ENCODE measurements at regions of chr15 and their contacts with region 1.

Region 1: DNA sequence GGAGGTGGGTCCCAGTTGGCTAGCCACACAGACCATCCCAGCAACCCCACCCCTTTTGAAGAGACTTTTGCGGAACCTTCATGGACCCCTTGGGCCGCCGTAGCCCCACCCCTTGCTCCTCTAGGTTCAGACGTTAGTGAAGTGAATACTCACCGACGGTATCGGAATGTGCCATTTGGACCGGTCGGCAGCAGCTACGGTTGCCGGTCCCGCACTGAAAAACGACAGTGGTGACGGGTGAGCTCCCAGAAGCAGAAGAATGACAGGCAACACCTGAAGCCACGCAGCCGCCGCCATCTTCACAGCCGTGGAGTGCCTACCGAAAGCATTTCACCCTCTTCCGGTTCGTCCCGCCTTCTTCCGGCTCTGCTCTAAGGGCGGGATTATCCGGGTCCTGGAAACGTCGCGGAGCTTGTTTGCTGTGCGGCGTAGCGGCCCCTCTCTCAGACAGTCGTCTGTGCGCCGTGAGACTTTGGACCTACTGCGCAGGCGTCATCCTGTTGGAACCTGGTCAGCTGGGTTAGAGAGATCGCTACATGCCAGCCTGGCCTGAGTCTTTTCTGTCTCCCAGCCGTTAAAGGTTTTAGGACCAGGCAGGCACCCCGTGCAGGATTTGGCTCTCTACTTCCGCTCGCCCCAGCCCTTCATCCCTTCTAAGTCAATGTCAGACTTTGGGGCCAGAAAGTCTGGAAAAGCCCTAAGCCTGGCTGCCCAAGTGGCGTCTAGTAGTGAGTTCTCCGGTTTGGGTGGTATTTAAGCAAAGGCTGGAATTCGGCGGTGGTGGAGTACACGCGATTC is at the starts of genes GANC and TMEM87A:
- H3K4me3 Mint-ChIP-seq: peak within 1 kb of the TSS; percentile 95
- H3K27ac Mint-ChIP-seq: peak within 1 kb of the TSS; percentile 96
- H3K4me1 Mint-ChIP-seq: peaks cover 40% of the 10 kb centered on the region
- H3K27me3 Mint-ChIP-seq: no peaks in the 10 kb centered on the region

Region 2: GRCh38 chr15:42084460-42085235 is 188.7 kb before region 1 on chr15:
- intact Hi-C with region 1: no loop called
- H3K4me3 Mint-ChIP-seq: no peak overlapping the region
- H3K27ac Mint-ChIP-seq: no peak overlapping the region
- H3K4me1 Mint-ChIP-seq: peaks cover 12% of the 10 kb centered on the region
- H3K27me3 Mint-ChIP-seq: peaks cover 12% of the 10 kb centered on the region

Region 3: DNA sequence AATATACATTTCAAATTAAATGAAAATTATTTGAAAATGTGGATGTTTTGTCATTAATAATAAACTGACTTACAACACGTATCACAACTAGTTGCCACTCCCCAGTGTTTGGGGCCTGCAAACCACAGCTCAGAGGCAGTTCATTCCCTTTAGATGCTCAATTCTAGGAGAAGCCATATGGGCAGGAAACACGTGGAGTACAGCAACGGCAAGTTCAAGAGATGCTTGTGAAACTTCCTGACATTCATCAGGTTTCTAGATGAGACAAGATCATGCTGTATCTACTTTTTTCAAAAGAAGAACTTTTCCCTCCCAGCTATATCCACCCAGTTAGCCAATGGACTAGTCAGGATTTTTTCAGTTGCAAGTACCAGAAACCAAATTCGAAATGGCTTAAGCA is 161.4 kb before region 1 on chr15:
- intact Hi-C with region 1: no loop called
- H3K4me3 Mint-ChIP-seq: no peak overlapping the region
- H3K27ac Mint-ChIP-seq: no peak overlapping the region
- H3K4me1 Mint-ChIP-seq: peaks cover 45% of the 10 kb centered on the region
- H3K27me3 Mint-ChIP-seq: no peaks in the 10 kb centered on the region

Region 4: GRCh38 chr15:42207674-42208579 is 65.4 kb before region 1 on chr15 and contains the start of gene VPS39:
- intact Hi-C with region 1: loop called (anchors 1 kb)
- H3K4me3 Mint-ChIP-seq: peak within 1 kb of the TSS; percentile 98
- H3K27ac Mint-ChIP-seq: peak within 1 kb of the TSS; percentile 98
- H3K4me1 Mint-ChIP-seq: peaks cover 28% of the 10 kb centered on the region
- H3K27me3 Mint-ChIP-seq: no peaks in the 10 kb centered on the region

Region 5: GRCh38 chr15:42449770-42450424 is 176.6 kb after region 1 on chr15:
- intact Hi-C with region 1: no loop called
- H3K4me3 Mint-ChIP-seq: no peak overlapping the region
- H3K27ac Mint-ChIP-seq: no peak overlapping the region
- H3K4me1 Mint-ChIP-seq: no peaks in the 10 kb centered on the region
- H3K27me3 Mint-ChIP-seq: no peaks in the 10 kb centered on the region

Region 6: DNA sequence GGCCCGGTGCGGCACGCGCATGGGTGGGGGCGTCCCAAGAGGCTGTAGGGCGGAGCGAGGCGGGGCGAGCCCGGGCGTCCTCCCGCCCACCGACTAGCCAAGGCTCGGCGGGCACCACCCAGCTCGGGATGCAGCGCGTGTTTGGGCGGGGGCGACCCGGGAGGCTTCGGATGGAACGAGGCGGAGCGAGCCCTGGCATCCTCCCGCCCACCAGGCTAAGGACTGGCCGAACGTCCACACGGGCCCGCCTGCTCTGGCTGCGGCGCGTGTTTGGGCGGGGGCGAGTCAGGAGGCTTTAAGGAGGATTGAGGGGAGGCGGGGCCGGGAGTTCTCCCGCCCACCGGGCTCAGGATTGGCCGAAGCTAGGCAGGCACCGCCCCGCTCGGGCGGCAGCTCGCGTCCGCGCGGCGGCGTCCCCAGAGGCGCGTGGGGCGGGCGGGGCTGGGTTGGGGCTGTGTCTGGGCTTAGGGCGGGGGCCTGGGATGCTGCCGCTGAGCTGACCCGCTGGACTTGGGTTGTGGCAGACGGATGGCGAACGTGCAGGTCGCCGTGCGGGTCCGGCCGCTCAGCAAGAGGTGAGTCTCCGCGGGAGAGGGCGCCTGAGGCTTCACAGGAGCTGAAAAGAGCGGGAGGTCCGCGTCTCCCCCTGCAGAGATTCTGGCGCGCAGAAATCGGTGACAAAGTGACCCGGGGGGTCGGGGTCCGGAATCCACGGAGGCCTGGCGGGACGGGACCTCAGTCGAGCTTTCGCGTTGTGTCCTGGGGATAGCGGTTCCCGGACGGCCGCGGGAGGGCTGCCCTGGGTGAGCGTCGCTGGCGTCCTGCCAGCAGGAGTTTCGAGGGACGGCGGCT is 302.1 kb after region 1 on chr15 and contains the start of gene STARD9:
- intact Hi-C with region 1: loop called (anchors 10 kb)
- H3K4me3 Mint-ChIP-seq: peak within 1 kb of the TSS; percentile 96
- H3K27ac Mint-ChIP-seq: peak within 1 kb of the TSS; percentile 81
- H3K4me1 Mint-ChIP-seq: peaks cover 26% of the 10 kb centered on the region
- H3K27me3 Mint-ChIP-seq: peaks cover 50% of the 10 kb centered on the region

Region 7: DNA sequence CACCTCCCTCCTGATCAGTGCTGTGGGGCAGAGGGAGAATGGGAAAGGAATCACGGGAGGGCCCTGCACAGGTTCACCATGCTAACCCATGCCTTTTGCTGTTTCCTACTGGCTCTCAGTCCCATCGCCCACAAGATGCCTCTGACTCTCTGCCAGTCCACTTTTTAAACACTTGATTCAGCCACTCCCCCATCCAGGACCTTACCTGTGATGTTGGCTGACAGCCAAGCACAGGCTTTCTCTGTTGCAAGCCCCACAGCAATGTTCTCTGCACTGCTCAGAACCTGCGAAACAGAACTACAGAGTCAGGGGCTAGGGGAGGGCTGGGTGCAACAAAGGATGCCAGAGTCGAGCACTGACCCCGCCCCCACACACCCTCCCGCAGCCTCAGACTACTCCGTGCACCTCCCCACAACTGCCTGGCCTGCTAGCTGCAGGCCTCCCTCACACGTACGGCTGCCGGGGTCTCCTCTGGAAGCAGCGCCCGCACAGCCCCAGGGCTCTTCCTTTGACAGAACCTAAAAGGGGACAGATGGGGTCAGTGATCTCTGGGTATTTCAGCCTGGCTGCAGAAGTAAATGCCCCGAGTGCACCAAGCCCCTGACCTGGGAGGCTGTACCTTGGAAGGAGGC is 454.6 kb after region 1 on chr15:
- intact Hi-C with region 1: no loop called
- H3K4me3 Mint-ChIP-seq: no peak overlapping the region
- H3K27ac Mint-ChIP-seq: no peak overlapping the region
- H3K4me1 Mint-ChIP-seq: peaks cover 3% of the 10 kb centered on the region
- H3K27me3 Mint-ChIP-seq: no peaks in the 10 kb centered on the region

Measured in dendritic cell treated with granulocyte-macrophage colony-stimulating factor and Interleukin-4, amounts not matched to agents 40 ng/mL and 50 ng/mL, for 4 days (primary cell).